Thyroid gland (tissue), 4 donors: ENCODE measurements at regions of chr3 and their contacts with region 1.

Region 1: DNA sequence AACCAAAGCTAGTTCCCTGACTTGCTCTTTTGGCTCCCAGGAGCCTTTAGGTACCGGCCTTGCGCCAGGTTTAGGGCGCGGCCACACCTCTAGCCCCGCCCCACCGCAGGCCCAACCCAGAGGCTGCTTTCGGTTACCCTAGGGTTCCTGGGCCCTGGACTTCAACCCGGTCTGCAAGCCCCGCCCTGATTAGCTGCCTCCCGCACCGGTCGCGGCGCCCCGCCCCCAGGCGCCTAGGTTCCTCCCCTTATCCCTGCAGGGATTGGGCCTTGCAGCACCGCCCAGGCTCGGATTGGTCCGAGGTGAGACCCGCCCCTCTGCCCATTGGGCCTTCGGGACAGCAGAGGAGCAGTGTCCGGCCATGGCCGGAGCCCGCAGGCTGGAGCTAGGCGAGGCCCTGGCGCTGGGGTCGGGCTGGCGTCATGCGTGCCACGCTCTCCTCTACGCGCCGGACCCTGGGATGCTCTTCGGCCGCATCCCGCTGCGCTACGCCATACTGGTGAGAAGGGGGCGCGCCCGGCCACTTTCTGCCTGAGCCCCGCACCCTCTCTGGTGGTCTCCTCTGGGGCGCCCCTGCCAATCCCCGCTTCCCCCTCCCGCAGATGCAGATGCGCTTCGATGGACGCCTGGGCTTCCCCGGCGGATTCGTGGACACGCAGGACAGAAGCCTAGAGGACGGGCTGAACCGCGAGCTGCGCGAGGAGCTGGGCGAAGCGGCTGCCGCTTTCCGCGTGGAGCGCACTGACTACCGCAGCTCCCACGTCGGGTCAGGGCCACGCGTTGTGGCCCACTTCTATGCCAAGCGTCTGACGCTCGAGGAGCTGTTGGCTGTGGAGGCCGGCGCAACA is at the start of gene NUDT16:
- DNase-seq: peak; percentile 100
- H3K4me3 ChIP-seq: peak within 1 kb of the TSS; percentile 46 to 85 (median 82)
- H3K27ac ChIP-seq: peak within 1 kb of the TSS; percentile 43 to 83 (median 78)
- H3K4me1 ChIP-seq: peaks cover 41 to 47% of the 10 kb centered on the region in 2 donors
- H3K27me3 ChIP-seq: no peaks in the 10 kb centered on the region
- CTCF ChIP-seq: no peak
- POLR2A ChIP-seq: peak; percentile 43 to 93
- total RNA-seq, gene NUDT16: 30.7 to 37.5 (median 34.4) TPM

Region 2: GRCh38 chr3:131231710-131232389 is 149.8 kb before region 1 on chr3:
- intact Hi-C with region 1: loop called (anchors 10 kb)
- DNase-seq: no peak
- H3K4me3 ChIP-seq: no peak overlapping the region
- H3K27ac ChIP-seq: no peak overlapping the region
- H3K4me1 ChIP-seq: no peaks in the 10 kb centered on the region
- H3K27me3 ChIP-seq: no peaks in the 10 kb centered on the region
- CTCF ChIP-seq: peak in 2 of 6 experiments; percentile 35 to 50
- POLR2A ChIP-seq: no peak

Region 3: DNA sequence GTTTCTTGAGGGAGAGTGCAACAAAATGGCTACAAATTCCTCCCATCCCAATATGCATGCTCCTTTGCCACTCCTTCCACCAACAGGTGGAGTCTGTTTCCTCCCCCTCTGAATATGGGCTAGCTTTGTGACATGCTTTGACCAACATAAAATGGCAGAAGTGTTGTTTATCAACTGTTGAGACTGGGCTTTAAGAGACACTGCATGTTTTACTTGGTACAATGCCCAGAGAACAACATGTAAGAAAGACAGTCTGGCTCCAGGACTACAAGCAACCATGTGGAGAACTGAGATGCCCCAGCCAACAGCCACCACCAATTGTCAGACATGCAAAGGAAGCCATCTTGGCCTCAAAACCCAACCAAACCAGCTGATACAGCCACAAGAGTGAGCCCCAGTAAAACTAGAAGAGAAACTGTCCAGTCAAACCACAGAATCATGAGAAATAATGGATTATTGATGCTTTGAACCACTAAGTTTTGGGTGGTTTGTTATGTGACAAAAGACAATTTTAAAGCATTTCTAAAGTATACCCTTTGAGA is 40.4 kb after region 1 on chr3:
- intact Hi-C with region 1: no loop called
- DNase-seq: no peak
- H3K4me3 ChIP-seq: no peak overlapping the region
- H3K27ac ChIP-seq: no peak overlapping the region
- H3K4me1 ChIP-seq: no peaks in the 10 kb centered on the region
- H3K27me3 ChIP-seq: no peaks in the 10 kb centered on the region
- CTCF ChIP-seq: no peak
- POLR2A ChIP-seq: no peak

Region 4: GRCh38 chr3:131485119-131485518 is 103.5 kb after region 1 on chr3:
- intact Hi-C with region 1: no loop called
- DNase-seq: no peak
- H3K4me3 ChIP-seq: no peak overlapping the region
- H3K27ac ChIP-seq: no peak overlapping the region
- H3K4me1 ChIP-seq: no peaks in the 10 kb centered on the region
- H3K27me3 ChIP-seq: no peaks in the 10 kb centered on the region
- CTCF ChIP-seq: no peak
- POLR2A ChIP-seq: no peak

Region 5: DNA sequence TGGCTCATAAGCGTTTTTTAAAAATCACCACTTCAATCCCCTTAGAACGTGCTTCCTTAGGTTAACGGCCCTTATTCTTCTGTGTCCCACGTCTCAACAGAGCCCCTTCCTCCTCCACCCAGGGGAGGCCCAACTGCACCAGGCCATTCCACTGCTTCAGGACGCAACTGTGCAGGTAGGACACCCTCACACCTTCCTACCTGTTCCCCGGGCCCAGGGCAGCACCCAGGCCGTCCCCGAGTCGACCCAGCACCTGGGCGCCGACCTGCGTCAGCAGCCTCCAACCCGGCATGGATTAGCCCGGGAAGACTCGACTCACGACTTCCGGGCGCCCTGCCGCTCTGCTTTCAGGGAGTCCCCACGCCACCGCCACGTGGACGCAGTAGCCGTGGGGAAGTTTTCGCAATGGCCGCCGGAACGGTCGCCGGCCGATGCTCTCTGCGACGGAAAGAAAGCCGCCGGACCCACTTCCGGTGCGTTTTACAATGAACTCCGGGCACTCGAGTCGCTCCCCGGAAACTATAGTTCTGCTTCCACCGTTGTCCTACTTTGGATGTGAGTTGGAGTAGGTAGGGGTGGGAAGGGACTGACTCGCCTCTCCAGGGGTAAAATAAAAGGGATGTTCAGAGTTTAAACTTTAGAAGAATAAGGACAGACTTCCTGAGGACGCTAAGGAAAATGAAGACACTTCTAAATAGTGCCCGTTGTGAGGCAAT is 121.0 kb after region 1 on chr3 and contains the start of gene MRPL3:
- intact Hi-C with region 1: loop called (anchors 10 kb)
- DNase-seq: peak; percentile 83 to 85
- H3K4me3 ChIP-seq: peak within 1 kb of the TSS; percentile 33 to 90 (median 68)
- H3K27ac ChIP-seq: peak within 1 kb of the TSS in 2 of 3 donors; percentile 62 to 66
- H3K4me1 ChIP-seq: peaks cover 15% of the 10 kb centered on the region in 2 donors
- H3K27me3 ChIP-seq: no peaks in the 10 kb centered on the region
- CTCF ChIP-seq: no peak
- POLR2A ChIP-seq: peak in 1 of 2 donors; percentile 55
- total RNA-seq, gene MRPL3: 96.6 to 128 (median 111) TPM